Head of caudate nucleus (tissue), 42 donors: ENCODE measurements at regions of chr14 and their contacts with region 1.

Region 1: GRCh38 chr14:63388763-63389431 is 70.2 kb upstream of the GPHB5 start:
- DNase-seq: peak in 41 of 42 donors; percentile 12 to 83 (median 61)

Region 2: DNA sequence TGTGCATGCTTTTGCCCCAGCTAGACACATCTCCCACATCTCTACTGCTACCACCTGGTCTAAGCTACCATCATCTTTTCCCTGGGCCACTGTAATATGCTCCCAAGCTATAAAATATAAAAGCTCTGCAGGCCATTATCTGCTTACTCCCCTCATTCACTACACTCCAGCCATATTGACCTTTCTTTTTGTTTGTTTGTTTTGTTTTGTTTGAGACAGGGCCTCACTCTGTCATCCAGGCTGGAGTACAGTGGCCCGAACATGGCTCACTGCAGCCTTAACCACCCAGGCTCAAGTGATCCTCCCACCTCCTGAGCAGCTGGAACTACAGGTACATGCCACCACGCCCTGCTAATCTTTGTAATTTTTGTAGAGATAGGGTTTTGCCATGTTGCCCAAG is 138.8 kb before region 1 on chr14:
- intact Hi-C with region 1: no loop called
- DNase-seq: no peak

Region 3: GRCh38 chr14:63632932-63633514 is 244.1 kb after region 1 on chr14:
- intact Hi-C with region 1: loop called (anchors 10 kb)
- DNase-seq: peak in 1 of 42 donors; percentile 20